ENCODE measurements at regions of chr16 and their contacts with region 1.

Region 1: GRCh38 chr16:2388875-2389433 is 40.3 kb upstream of the CCNF start:
- DNase-seq: peak; percentile 82
- ATAC-seq: peak; percentile 67; the same call in 1 of the 2 replicates
- H3K4me3 ChIP-seq: no peak overlapping the region
- H3K27ac ChIP-seq: no peak overlapping the region
- H3K4me1 ChIP-seq: 0 out of 2 replicates have a peak, but pooled peaks cover 3% of the 10 kb centered on the region
- H3K27me3 ChIP-seq: peaks cover 4% of the 10 kb centered on the region; the same call in 1 of the 2 replicates
- CTCF ChIP-seq: no peak
- POLR2A ChIP-seq: no peak
- RAD21 ChIP-seq: no peak

Region 2: GRCh38 chr16:1884155-1884760 is 504.7 kb before region 1 on chr16:
- CTCF ChIA-PET with region 1: no interaction called
- POLR2A ChIA-PET with region 1: no interaction called
- dilution Hi-C with region 1: no loop called
- in situ Hi-C with region 1: loop called (anchors 25 kb)
- intact Hi-C with region 1: no loop called
- DNase-seq: no peak
- ATAC-seq: no peak
- H3K4me3 ChIP-seq: no peak overlapping the region
- H3K27ac ChIP-seq: no peak overlapping the region
- H3K4me1 ChIP-seq: no peaks in the 10 kb centered on the region
- H3K27me3 ChIP-seq: peaks cover 26% of the 10 kb centered on the region
- CTCF ChIP-seq: no peak
- POLR2A ChIP-seq: no peak
- RAD21 ChIP-seq: no peak

Region 3: GRCh38 chr16:2358811-2359210 is 30.1 kb before region 1 on chr16:
- CTCF ChIA-PET with region 1: no interaction called
- POLR2A ChIA-PET with region 1: no interaction called
- dilution Hi-C with region 1: no loop called
- in situ Hi-C with region 1: no loop called
- intact Hi-C with region 1: loop called (anchors 5 kb)
- DNase-seq: no peak
- ATAC-seq: no peak
- H3K4me3 ChIP-seq: no peak overlapping the region
- H3K27ac ChIP-seq: no peak overlapping the region
- H3K4me1 ChIP-seq: no peaks in the 10 kb centered on the region
- H3K27me3 ChIP-seq: peaks cover 21% of the 10 kb centered on the region
- CTCF ChIP-seq: no peak
- POLR2A ChIP-seq: no peak
- RAD21 ChIP-seq: no peak

Measured in IMR-90 (cell line).